ENCODE measurements at regions of chr6 and their contacts with region 1.

Region 1: DNA sequence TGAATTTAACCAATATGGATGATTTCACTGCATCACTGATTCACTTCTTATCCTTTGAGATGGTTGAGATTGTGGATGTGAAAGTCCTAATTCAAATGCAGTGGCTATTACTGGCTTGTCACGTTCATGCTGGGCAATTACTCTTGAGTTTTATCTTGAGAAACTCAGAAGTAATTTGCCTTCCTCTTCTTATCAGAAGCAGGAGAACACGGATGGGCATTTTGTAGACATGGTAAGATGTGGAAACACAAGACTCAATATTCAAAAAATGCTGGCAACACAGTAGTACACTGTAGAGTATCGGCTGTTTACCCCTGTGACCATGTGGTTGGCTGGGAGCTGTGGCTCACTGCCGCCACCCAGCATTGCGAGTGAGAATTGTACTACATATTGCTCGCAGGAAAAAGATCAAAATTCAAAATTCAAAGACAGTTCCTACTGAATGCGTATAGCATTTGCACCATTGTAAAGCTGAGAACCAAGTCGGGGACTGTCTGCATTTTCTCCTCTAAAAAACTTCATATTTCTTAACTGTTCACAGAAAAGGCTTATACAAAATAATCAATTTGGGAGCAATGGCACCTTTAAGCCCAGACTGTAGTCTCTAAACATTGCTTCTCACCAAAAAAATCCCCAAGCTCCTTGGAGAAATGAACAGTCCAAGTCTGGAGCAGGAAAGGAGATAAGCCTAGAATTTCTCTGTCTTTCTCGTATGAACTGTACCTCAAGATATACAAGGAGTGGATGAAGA is 61.9 kb upstream of the ELOVL5 start:
- DNase-seq: peak; percentile 70
- H3K4me3 Mint-ChIP-seq: no peak overlapping the region
- H3K27ac Mint-ChIP-seq: no peak overlapping the region
- H3K4me1 Mint-ChIP-seq: peaks cover 3% of the 10 kb centered on the region
- H3K27me3 Mint-ChIP-seq: no peaks in the 10 kb centered on the region

Region 2: GRCh38 chr6:53284901-53285300 is 125.8 kb before region 1 on chr6:
- CTCF ChIA-PET with region 1: interaction called, 11 read pairs
- POLR2A ChIA-PET with region 1: no interaction called
- intact Hi-C with region 1: no loop called
- DNase-seq: peak; percentile 57
- H3K4me3 Mint-ChIP-seq: peak overlapping the region; percentile 30
- H3K27ac Mint-ChIP-seq: peak overlapping the region; percentile 68
- H3K4me1 Mint-ChIP-seq: peaks cover 69% of the 10 kb centered on the region
- H3K27me3 Mint-ChIP-seq: no peaks in the 10 kb centered on the region

Region 3: DNA sequence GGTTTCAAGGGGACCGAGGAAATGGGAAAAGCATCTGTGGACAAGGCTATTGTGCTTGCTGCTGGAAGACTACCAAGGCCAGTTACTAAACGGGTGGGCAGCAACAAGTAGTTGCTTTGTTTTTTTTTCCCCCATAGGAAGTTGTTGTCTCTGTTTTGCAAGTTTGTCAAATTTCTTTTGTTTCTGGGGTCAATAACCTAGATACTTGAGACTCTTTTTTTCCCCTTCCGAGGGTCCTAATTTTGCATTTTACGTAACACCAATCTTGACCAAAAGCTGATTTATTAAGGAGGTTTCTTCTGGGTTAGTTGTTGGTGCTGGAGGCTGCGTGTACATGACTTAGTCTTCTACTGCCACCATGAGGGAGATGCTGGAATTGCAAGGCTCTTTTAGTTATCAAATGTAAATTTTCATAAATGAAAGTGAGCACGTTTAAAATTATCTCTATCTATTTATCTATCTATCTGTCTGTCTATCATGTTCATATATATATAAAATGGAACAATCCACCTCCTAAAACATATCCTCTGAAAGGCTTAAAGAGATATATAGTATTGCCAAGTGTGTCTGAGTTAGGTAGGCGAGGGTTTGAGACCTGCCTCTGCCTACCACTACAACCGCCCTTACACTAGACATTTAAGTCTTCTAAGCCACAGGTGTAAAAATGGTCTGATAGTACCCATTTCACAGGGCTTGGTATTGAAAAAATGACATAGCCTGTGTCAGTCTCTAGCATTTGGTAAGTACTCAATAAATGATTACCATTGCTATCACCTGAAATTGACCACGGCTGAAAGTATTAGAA is 74.0 kb after region 1 on chr6:
- CTCF ChIA-PET with region 1: interaction called, 5 read pairs
- POLR2A ChIA-PET with region 1: no interaction called
- intact Hi-C with region 1: loop called (anchors 1 kb)
- DNase-seq: peak; percentile 68
- H3K4me3 Mint-ChIP-seq: no peak overlapping the region
- H3K27ac Mint-ChIP-seq: no peak overlapping the region
- H3K4me1 Mint-ChIP-seq: peaks cover 9% of the 10 kb centered on the region
- H3K27me3 Mint-ChIP-seq: peaks cover 28% of the 10 kb centered on the region

Region 4: DNA sequence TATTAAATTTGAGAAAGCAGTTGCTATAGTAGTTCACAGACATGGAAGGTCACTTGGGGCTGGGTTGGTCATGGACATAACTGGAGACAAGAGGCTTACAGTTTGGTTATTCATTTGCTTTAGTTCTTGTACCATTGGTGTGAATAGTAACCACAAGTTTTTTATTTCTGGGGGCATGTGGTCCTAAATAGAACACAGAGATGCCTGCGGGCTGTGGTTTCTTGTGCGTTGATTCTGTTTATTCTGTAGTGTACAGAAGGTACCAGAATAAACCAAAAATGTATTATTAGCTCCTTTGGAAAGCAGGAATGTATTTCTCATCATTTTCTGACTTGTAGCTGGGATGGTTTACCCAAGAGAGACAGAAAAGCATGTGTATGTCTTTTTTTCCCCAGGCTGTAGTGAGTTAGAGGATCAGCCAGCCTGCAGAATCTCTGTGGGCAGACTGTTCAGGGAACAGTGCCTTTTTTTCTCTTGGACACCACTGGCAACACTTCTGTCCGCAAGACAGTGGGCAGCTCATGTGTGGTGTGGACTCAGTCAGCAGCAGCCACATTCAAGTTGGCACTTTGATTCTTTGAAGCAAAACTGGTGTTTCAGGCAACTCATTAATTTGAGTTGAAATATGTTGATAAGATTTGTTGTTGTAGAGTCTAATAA is 506.3 kb after region 1 on chr6:
- CTCF ChIA-PET with region 1: no interaction called
- POLR2A ChIA-PET with region 1: no interaction called
- intact Hi-C with region 1: no loop called
- DNase-seq: no peak
- H3K4me3 Mint-ChIP-seq: no peak overlapping the region
- H3K27ac Mint-ChIP-seq: no peak overlapping the region
- H3K4me1 Mint-ChIP-seq: no peaks in the 10 kb centered on the region
- H3K27me3 Mint-ChIP-seq: no peaks in the 10 kb centered on the region

Measured in activated CD4-positive, alpha-beta memory T cell treated with anti-CD3 and anti-CD28 coated beads for 36 hours (primary cell).